ENCODE measurements at regions of chr20 and their contacts with region 1.

Region 1: GRCh38 chr20:2172305-2173175 is 70.9 kb downstream of the STK35 start:
- DNase-seq: peak; percentile 56
- H3K4me3 Mint-ChIP-seq: no peak overlapping the region
- H3K27ac Mint-ChIP-seq: no peak overlapping the region
- H3K4me1 Mint-ChIP-seq: no peaks in the 10 kb centered on the region
- H3K27me3 Mint-ChIP-seq: peaks cover 73% of the 10 kb centered on the region
- CTCF ChIP-seq: peak; percentile 70

Region 2: GRCh38 chr20:1764136-1765033 is 408.2 kb before region 1 on chr20:
- CTCF ChIA-PET with region 1: no interaction called
- intact Hi-C with region 1: loop called (anchors 2 kb)
- DNase-seq: peak; percentile 72
- H3K4me3 Mint-ChIP-seq: no peak overlapping the region
- H3K27ac Mint-ChIP-seq: no peak overlapping the region
- H3K4me1 Mint-ChIP-seq: peaks cover 15% of the 10 kb centered on the region
- H3K27me3 Mint-ChIP-seq: no peaks in the 10 kb centered on the region
- CTCF ChIP-seq: peak; percentile 65

Region 3: DNA sequence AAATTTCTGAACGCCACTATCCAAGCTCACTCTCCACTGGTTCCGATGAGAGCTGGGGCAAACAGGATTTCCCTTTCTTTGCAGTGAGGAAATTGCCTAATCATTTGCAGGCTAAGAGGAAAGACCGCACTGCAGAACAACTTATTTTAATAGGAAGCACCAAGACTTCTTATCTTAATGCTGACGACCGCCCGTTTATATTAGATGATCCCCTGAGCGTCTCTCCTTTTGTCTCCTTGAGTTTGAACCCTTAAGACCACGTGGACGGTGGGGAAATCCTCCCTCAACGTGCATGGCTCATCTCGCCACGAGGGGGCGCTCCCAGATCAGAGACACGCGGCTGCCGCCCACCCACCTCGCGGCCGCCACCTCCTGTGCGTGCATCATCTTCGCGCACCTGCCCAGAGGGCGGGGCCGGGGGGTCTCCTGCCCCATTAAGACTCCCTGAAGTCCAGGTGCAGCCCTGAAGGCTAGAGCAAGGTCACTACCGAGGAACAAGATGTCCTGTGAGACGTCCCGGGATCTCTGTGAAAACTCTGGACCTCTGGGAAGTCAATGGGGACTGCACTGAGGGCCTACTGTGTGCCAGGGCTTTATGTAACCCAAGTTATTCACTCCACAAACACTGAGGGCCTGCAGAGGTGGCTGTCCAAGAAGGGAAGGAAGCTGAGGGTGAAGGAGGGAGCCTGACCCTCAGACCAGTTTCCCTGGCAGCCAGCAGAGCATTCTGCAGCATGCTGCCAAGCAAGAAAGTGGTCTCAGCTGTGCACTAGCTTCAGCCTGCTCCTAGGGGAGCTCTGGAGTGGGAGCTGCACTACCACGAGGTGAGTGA is 206.8 kb before region 1 on chr20:
- CTCF ChIA-PET with region 1: interaction called, 3 read pairs
- intact Hi-C with region 1: loop called (anchors 2 kb)
- DNase-seq: peak; percentile 77
- H3K4me3 Mint-ChIP-seq: peak overlapping the region; percentile 16
- H3K27ac Mint-ChIP-seq: no peak overlapping the region
- H3K4me1 Mint-ChIP-seq: no peaks in the 10 kb centered on the region
- H3K27me3 Mint-ChIP-seq: peaks cover 57% of the 10 kb centered on the region
- CTCF ChIP-seq: peak; percentile 72

Region 4: GRCh38 chr20:2005831-2006426 is 166.6 kb before region 1 on chr20:
- CTCF ChIA-PET with region 1: interaction called, 5 read pairs
- intact Hi-C with region 1: loop called (anchors 5 kb)
- DNase-seq: peak; percentile 73
- H3K4me3 Mint-ChIP-seq: no peak overlapping the region
- H3K27ac Mint-ChIP-seq: no peak overlapping the region
- H3K4me1 Mint-ChIP-seq: no peaks in the 10 kb centered on the region
- H3K27me3 Mint-ChIP-seq: peaks cover 42% of the 10 kb centered on the region
- CTCF ChIP-seq: no peak

Region 5: GRCh38 chr20:2101865-2102584 is 70.5 kb before region 1 on chr20:
- CTCF ChIA-PET with region 1: interaction called, 3 read pairs
- intact Hi-C with region 1: loop called (anchors 10 kb)
- DNase-seq: peak; percentile 86
- H3K4me3 Mint-ChIP-seq: peak overlapping the region; percentile 77
- H3K27ac Mint-ChIP-seq: peak overlapping the region; percentile 98
- H3K4me1 Mint-ChIP-seq: peaks cover 10% of the 10 kb centered on the region
- H3K27me3 Mint-ChIP-seq: no peaks in the 10 kb centered on the region
- CTCF ChIP-seq: no peak

Region 6: GRCh38 chr20:2840138-2840966 is 667.8 kb after region 1 on chr20 and contains the starts of genes PCED1A and VPS16:
- CTCF ChIA-PET with region 1: no interaction called
- intact Hi-C with region 1: no loop called
- DNase-seq: peak; percentile 85
- H3K4me3 Mint-ChIP-seq: peak within 1 kb of the TSS; percentile 90
- H3K27ac Mint-ChIP-seq: peak within 1 kb of the TSS; percentile 48
- H3K4me1 Mint-ChIP-seq: peaks cover 8% of the 10 kb centered on the region
- H3K27me3 Mint-ChIP-seq: no peaks in the 10 kb centered on the region
- CTCF ChIP-seq: no peak
- total RNA-seq, gene PCED1A: 26.9 and 27.1 TPM in 2 replicates
- total RNA-seq, gene VPS16: 22.2 and 25.9 TPM in 2 replicates

Measured in Calu3 (cell line).